ENCODE measurements at regions of chr12 and their contacts with region 1.

Region 1: GRCh38 chr12:81450920-81451739 is 308.0 kb downstream of the PPFIA2 start:
- DNase-seq: peak in 1 of 2 donors; percentile 7
- ATAC-seq: peak; percentile 55

Region 2: GRCh38 chr12:81395431-81395830 is 55.7 kb before region 1 on chr12:
- intact Hi-C with region 1: no loop called
- DNase-seq: no peak
- ATAC-seq: no peak

Region 3: GRCh38 chr12:81588235-81589008 is 137.3 kb after region 1 on chr12:
- intact Hi-C with region 1: no loop called
- DNase-seq: no peak
- ATAC-seq: no peak

Region 4: GRCh38 chr12:81627336-81628189 is 176.4 kb after region 1 on chr12:
- intact Hi-C with region 1: loop called in 1 of 2 experiments (anchors 10 kb)
- DNase-seq: no peak
- ATAC-seq: no peak

Region 5: GRCh38 chr12:81859521-81859920 is 408.4 kb after region 1 on chr12:
- intact Hi-C with region 1: no loop called
- DNase-seq: no peak
- ATAC-seq: peak; percentile 100

Measured in left colon (tissue), 2 donors.